Colonic mucosa (tissue), 4 donors: ENCODE measurements at regions of chr5 and their contacts with region 1.

Region 1: GRCh38 chr5:115309751-115310370 is 13.4 kb upstream of the CCDC112 start:
- DNase-seq: no peak
- H3K4me3 ChIP-seq: no peak overlapping the region
- H3K27ac ChIP-seq: no peak overlapping the region
- H3K4me1 ChIP-seq: no peaks in the 10 kb centered on the region
- H3K27me3 ChIP-seq: no peaks in the 10 kb centered on the region
- CTCF ChIP-seq: peak; percentile 69

Region 2: DNA sequence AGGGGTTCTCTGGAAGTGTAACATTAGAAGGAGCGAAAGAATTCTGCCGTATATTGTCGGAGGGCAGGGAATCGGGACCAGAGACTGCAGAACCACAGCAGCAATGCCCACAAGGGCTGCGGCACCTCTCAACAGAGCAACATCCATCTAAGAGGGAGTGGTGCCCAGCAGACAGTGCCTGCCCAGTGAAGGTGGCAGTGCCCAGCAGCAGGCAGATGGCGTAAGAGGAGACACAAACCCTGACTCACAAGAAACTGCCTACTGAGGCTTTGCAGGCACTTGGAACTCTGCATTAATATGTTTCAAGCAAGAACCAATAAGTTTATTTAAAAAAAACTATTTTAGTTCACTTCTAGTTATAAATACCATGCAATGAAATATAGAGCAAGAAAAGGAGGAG is 511.9 kb before region 1 on chr5:
- intact Hi-C with region 1: no loop called
- DNase-seq: no peak
- H3K4me3 ChIP-seq: no peak overlapping the region
- H3K27ac ChIP-seq: no peak overlapping the region
- H3K4me1 ChIP-seq: no peaks in the 10 kb centered on the region
- H3K27me3 ChIP-seq: no peaks in the 10 kb centered on the region
- CTCF ChIP-seq: no peak

Region 3: GRCh38 chr5:115579747-115580173 is 269.9 kb after region 1 on chr5:
- intact Hi-C with region 1: loop called (anchors 5 kb)
- DNase-seq: no peak
- H3K4me3 ChIP-seq: no peak overlapping the region
- H3K27ac ChIP-seq: no peak overlapping the region
- H3K4me1 ChIP-seq: no peaks in the 10 kb centered on the region
- H3K27me3 ChIP-seq: no peaks in the 10 kb centered on the region
- CTCF ChIP-seq: no peak

Region 4: GRCh38 chr5:115586601-115587048 is 276.8 kb after region 1 on chr5:
- intact Hi-C with region 1: loop called (anchors 5 kb)
- DNase-seq: no peak
- H3K4me3 ChIP-seq: no peak overlapping the region
- H3K27ac ChIP-seq: no peak overlapping the region
- H3K4me1 ChIP-seq: no peaks in the 10 kb centered on the region
- H3K27me3 ChIP-seq: no peaks in the 10 kb centered on the region
- CTCF ChIP-seq: peak; percentile 42

Region 5: DNA sequence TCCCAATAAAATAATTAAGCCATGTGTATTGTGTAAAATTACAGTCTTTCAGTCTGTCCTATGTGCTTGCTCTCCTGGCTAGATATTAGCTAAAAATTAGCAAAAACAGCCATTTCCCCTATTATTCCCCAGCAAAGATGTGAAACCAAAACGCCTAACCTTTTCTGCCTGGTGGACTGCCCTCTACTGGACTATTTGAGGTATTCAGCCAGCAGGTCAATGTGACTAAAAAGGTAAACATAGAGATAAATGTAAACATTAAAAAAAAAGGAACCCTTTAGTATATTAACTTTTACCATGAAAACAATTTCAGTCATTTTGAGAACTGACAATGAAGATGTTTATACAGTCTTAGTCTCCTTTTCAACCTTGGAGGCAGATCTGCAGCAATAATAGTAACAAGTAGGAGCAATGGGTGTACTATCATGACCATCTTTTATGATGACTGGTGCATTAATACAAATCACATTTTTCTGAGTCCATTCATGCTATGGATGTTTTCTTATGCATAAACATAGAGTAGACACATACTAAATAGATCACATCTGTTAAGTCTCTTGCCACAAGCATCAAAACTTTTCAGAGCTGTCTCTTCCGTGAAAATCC is 521.4 kb after region 1 on chr5:
- intact Hi-C with region 1: loop called (anchors 10 kb)
- DNase-seq: no peak
- H3K4me3 ChIP-seq: no peak overlapping the region
- H3K27ac ChIP-seq: no peak overlapping the region
- H3K4me1 ChIP-seq: no peaks in the 10 kb centered on the region
- H3K27me3 ChIP-seq: no peaks in the 10 kb centered on the region
- CTCF ChIP-seq: peak; percentile 66